ENCODE measurements at regions of chr2 and their contacts with region 1.

Region 1: DNA sequence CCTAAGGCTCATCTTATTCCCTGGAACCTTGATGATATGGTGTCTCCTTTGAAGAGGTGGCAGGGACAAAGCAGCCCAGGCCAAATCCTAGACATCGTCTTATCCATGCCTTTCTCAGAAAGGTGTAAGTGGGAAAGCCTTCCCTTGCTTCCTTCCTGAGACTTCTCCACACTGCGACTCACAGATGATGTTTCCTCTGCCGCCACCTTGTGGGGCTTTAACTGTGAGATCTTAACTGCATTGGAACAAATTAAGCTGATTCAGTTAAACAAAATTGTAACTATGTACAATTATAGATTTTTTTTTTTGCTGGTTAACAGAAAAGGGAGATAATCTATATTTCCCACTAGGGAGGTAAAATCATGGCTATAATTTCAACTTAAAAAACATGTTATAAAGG is 10.0 kb upstream of the GCA start:
- DNase-seq: peak; percentile 38
- H3K4me3 Mint-ChIP-seq: no peak overlapping the region
- H3K27ac Mint-ChIP-seq: no peak overlapping the region
- H3K4me1 Mint-ChIP-seq: no peaks in the 10 kb centered on the region
- H3K27me3 Mint-ChIP-seq: no peaks in the 10 kb centered on the region

Region 2: DNA sequence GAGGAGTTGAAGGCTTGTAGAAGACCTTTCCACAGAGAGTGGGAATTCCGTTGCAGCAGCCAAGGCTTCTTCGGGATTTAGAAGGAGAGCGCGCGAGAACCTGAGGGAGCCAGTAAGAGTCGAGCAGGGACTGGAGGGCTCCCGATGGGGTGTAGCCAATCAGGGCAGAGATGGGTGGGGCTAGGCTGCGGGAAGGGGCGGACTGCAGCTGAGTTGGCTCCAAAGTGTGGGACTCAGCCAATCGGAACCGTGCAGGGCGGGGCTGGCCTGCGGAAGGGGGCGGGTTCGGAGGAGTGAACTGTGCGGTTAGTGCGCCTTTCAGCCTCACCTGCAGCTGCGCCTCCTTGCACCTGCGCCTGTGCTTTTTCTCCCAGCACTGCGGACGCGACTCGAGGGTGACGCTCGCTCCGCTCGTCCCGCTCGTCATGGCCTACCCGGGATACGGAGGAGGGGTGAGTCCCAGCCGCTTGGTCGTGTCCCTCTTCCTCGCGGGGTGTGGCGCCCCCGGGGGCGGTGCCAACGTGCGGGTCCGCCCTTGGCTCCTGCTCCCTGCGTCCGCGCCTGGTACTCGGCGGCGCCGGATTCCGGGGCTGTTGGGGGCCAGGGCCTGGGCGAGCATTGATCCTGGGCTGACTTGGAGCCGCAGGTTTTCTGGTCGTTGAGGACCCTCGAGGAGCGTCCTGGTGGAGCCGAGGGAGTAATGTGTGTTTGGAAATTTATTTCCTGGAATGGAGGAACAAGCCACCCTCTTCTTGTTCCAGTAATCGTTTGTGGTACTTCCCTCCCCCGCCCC is 10.1 kb after region 1 on chr2 and contains the start of gene GCA:
- CTCF ChIA-PET with region 1: interaction called, 15 read pairs
- POLR2A ChIA-PET with region 1: no interaction called
- intact Hi-C with region 1: no loop called
- DNase-seq: peak; percentile 99
- H3K4me3 Mint-ChIP-seq: peak within 1 kb of the TSS; percentile 80
- H3K27ac Mint-ChIP-seq: peak within 1 kb of the TSS; percentile 49
- H3K4me1 Mint-ChIP-seq: peaks cover 10% of the 10 kb centered on the region
- H3K27me3 Mint-ChIP-seq: no peaks in the 10 kb centered on the region
- total RNA-seq, gene GCA: 30.5 to 32.1 TPM